GM12878 (cell line): ENCODE measurements at regions of chr7 and their contacts with region 1.

Region 1: GRCh38 chr7:34727464-34727995 is 69.5 kb downstream of the NPSR1 start:
- DNase-seq: no peak
- ATAC-seq: peak; percentile 76
- H3K4me3 ChIP-seq: no peak overlapping the region
- H3K27ac ChIP-seq: no peak overlapping the region
- H3K4me1 ChIP-seq: no peaks in the 10 kb centered on the region
- H3K27me3 ChIP-seq: no peaks in the 10 kb centered on the region
- CTCF ChIP-seq: no peak
- EP300 ChIP-seq: no peak
- POLR2A ChIP-seq: no peak
- RAD21 ChIP-seq: no peak

Region 2: GRCh38 chr7:34709771-34710170 is 17.8 kb before region 1 on chr7:
- CTCF ChIA-PET with region 1: interaction called, 6 read pairs
- POLR2A ChIA-PET with region 1: interaction called, 3 read pairs
- RAD21 ChIA-PET with region 1: interaction called, 3 read pairs
- SMC1A ChIA-PET with region 1: interaction called, 24 read pairs
- in situ Hi-C with region 1: no loop called
- intact Hi-C with region 1: no loop called
- DNase-seq: no peak
- ATAC-seq: no peak
- H3K4me3 ChIP-seq: no peak overlapping the region
- H3K27ac ChIP-seq: no peak overlapping the region
- H3K4me1 ChIP-seq: no peaks in the 10 kb centered on the region
- H3K27me3 ChIP-seq: no peaks in the 10 kb centered on the region
- CTCF ChIP-seq: no peak
- EP300 ChIP-seq: no peak
- POLR2A ChIP-seq: no peak
- RAD21 ChIP-seq: no peak

Region 3: DNA sequence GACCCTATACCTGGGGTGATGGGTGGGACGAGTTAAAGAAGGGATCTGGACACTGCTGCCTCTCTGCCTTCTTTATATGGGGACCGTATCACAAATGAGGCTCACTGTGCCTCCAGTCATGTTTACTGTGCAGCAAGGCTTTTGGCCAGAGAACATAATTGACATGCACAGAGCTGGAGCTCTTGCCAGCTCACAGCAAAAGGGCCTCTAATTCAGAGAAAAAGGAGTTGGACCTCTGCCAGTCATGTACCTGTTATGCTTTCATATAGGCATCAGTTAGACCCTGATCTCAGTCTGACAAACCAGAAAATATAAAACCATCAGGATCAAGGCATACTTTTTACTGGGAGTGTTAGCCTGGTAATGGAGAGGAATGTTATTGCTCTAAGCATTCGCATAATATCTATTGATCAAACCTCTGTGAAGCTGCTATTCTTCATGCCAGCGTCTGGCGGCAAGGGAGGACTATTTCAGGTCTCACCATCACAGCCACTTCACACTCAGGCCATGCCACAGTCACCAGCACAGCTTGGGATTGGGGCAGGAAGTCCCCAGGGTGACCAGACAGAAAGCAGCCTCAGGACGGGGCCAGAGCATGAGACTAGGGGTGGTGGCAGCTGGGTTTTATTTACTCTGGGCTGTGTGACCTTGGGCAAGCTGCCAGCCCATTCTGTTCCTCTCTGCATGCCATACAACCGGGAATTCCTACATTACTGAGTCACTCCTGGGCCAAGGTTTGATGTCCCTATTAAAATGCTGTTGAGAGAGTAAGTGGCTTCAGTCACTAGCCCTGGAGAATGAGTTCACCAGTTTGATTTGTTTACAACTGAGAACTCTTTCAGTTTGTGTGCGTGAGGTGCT is 20.6 kb after region 1 on chr7:
- CTCF ChIA-PET with region 1: interaction called, 46 read pairs
- POLR2A ChIA-PET with region 1: interaction called, 17 read pairs
- RAD21 ChIA-PET with region 1: interaction called, 362 read pairs
- SMC1A ChIA-PET with region 1: interaction called, 220 read pairs
- in situ Hi-C with region 1: no loop called
- intact Hi-C with region 1: no loop called
- DNase-seq: no peak
- ATAC-seq: peak; percentile 64
- H3K4me3 ChIP-seq: no peak overlapping the region
- H3K27ac ChIP-seq: no peak overlapping the region
- H3K4me1 ChIP-seq: no peaks in the 10 kb centered on the region
- H3K27me3 ChIP-seq: no peaks in the 10 kb centered on the region
- CTCF ChIP-seq: peak in 1 of 3 experiments; percentile 24; a peak in 2 of 6 replicates
- EP300 ChIP-seq: no peak
- POLR2A ChIP-seq: no peak
- RAD21 ChIP-seq: no peak

Region 4: GRCh38 chr7:34916267-34916666 is 188.7 kb after region 1 on chr7:
- CTCF ChIA-PET with region 1: no interaction called
- POLR2A ChIA-PET with region 1: no interaction called
- RAD21 ChIA-PET with region 1: no interaction called
- SMC1A ChIA-PET with region 1: no interaction called
- in situ Hi-C with region 1: no loop called
- intact Hi-C with region 1: no loop called
- DNase-seq: no peak
- ATAC-seq: no peak
- H3K4me3 ChIP-seq: no peak overlapping the region
- H3K27ac ChIP-seq: no peak overlapping the region
- H3K4me1 ChIP-seq: no peaks in the 10 kb centered on the region
- H3K27me3 ChIP-seq: no peaks in the 10 kb centered on the region
- CTCF ChIP-seq: no peak
- EP300 ChIP-seq: no peak
- POLR2A ChIP-seq: no peak
- RAD21 ChIP-seq: no peak